ENCODE measurements at regions of chr15 and their contacts with region 1.

Region 1: GRCh38 chr15:91706322-91707032 is 147.0 kb upstream of the SLCO3A1 start:
- DNase-seq: peak; percentile 85
- H3K4me3 Mint-ChIP-seq: no peak overlapping the region
- H3K27ac Mint-ChIP-seq: no peak overlapping the region
- H3K4me1 Mint-ChIP-seq: no peaks in the 10 kb centered on the region
- H3K27me3 Mint-ChIP-seq: no peaks in the 10 kb centered on the region
- CTCF ChIP-seq: peak; percentile 87

Region 2: DNA sequence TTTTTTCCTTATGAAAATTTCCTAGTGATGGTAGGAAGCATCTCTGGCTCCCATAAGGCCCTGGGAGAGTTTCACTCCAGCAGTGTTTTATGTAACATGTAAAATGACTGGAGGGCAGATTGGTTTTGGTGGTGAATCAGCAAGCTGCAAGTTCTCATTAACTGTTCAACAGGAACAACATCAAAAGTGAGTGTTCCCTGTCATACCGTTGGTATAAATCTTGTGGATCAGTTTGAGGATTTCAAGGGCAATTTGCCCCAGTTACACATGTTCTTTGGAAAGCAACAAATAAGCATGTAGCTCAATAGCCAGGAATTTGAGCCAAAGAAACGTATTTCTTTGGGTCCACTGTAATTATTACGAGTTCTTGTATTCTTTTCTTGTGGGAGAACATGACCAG is 260.7 kb before region 1 on chr15:
- CTCF ChIA-PET with region 1: no interaction called
- intact Hi-C with region 1: no loop called
- DNase-seq: no peak
- H3K4me3 Mint-ChIP-seq: no peak overlapping the region
- H3K27ac Mint-ChIP-seq: no peak overlapping the region
- H3K4me1 Mint-ChIP-seq: no peaks in the 10 kb centered on the region
- H3K27me3 Mint-ChIP-seq: no peaks in the 10 kb centered on the region
- CTCF ChIP-seq: no peak

Region 3: DNA sequence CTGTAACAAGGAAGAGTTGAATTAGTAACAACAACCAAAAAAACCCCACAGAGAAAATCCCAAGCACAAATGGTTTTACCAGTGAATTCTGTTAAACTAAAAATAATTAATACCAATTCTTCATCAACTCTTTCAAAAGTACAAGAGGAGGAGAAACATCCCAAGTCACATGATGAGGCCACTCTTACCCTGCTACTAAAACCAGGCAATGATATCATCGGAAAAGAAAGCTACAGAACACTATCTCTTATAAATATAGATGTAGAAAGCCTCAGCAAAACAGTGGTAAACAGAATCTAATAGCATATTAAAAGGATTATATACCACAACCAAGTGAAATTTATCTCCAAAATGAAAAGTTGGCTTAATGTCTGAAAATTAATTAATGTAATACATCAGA is 21.0 kb before region 1 on chr15:
- CTCF ChIA-PET with region 1: no interaction called
- intact Hi-C with region 1: no loop called
- DNase-seq: no peak
- H3K4me3 Mint-ChIP-seq: no peak overlapping the region
- H3K27ac Mint-ChIP-seq: no peak overlapping the region
- H3K4me1 Mint-ChIP-seq: no peaks in the 10 kb centered on the region
- H3K27me3 Mint-ChIP-seq: peaks cover 40% of the 10 kb centered on the region
- CTCF ChIP-seq: no peak

Region 4: GRCh38 chr15:91852741-91853510 is 146.4 kb after region 1 on chr15:
- CTCF ChIA-PET with region 1: interaction called, 7 read pairs
- intact Hi-C with region 1: loop called (anchors 2 kb)
- DNase-seq: peak; percentile 87
- H3K4me3 Mint-ChIP-seq: peak overlapping the region; percentile 84
- H3K27ac Mint-ChIP-seq: peak overlapping the region; percentile 78
- H3K4me1 Mint-ChIP-seq: peaks cover 45% of the 10 kb centered on the region
- H3K27me3 Mint-ChIP-seq: no peaks in the 10 kb centered on the region
- CTCF ChIP-seq: peak; percentile 95

Measured in Calu3 (cell line).